MCF 10A (cell line): ENCODE measurements at regions of chr21 and their contacts with region 1.

Region 1: DNA sequence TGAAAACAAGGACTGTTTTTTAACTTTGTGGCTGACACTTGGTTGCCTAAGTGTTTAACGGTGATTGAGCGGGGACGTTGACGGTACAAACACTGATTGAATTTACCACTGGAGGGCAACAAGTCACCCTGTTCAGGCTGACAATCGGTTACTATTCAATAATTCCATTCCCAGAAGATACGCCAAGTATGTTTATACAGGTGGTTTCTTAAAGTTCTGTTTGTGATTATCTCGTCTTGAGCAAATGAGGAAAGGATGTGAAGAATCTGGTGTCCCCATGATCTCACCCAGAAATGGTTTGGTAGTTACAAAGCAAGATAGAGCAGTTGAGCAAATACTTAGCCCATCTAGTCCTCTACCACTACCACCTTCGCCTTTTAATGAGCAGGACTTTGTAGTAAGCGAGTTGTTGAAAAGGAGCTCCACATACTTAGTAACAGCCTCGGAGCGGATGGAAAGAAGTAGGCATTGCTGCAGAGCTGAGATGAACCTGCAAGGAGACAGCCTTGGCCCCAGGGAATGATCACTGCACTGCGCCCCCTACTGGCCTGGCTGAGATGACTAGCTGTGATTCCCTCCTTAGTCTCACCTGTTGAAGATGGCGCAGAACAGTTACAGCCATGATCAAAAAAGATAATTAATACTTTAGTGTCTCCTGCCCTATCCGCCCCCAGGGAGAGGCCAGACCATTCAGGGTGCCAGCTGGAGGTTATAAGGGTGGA is 36.3 kb downstream of the IFNAR1 start:
- DNase-seq: peak; percentile 81
- H3K4me3 Mint-ChIP-seq: peak overlapping the region; percentile 53
- H3K27ac Mint-ChIP-seq: peak overlapping the region; percentile 16
- H3K4me1 Mint-ChIP-seq: peaks cover 14% of the 10 kb centered on the region
- H3K27me3 Mint-ChIP-seq: no peaks in the 10 kb centered on the region
- CTCF ChIP-seq: peak; percentile 86

Region 2: DNA sequence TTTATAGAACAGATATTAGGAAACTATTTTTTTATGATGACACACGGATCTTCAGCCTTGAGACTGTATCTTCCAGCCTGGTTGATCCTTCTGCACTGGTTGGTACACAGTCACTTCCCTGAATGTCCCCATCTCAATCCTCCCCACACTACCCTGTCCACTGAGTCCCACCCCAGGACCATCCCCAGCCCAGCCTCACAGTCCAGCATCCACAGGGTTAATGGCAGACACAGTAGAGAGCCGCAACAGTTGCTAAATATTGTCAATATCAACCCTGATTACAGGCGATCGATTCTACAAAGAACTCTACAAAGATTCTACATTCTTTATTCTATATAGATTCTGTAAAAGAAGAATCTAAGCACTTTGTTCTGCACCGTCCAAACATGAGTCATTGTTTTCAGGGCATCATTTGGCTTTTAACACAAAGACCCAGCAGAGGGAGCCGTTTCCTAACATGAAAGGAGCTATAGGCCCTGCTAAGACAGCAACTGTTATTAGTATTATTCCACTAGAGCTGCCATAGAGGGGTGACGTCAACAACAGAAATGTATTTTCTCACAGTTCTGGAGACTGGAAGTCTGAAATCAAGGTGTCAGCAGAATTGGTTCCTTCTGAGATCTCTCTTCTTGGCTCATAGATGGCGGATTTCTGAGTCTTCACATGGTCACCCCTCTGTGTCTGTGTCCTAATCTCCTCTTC is 161.4 kb before region 1 on chr21:
- CTCF ChIA-PET with region 1: interaction called, 11 read pairs
- POLR2A ChIA-PET with region 1: interaction called, 10 read pairs
- intact Hi-C with region 1: loop called (anchors 1 kb)
- DNase-seq: peak; percentile 96
- H3K4me3 Mint-ChIP-seq: no peak overlapping the region
- H3K27ac Mint-ChIP-seq: no peak overlapping the region
- H3K4me1 Mint-ChIP-seq: peaks cover 20% of the 10 kb centered on the region
- H3K27me3 Mint-ChIP-seq: peaks cover 20% of the 10 kb centered on the region
- CTCF ChIP-seq: peak; percentile 76

Region 3: GRCh38 chr21:33348706-33349105 is 12.3 kb before region 1 on chr21:
- CTCF ChIA-PET with region 1: interaction called, 26 read pairs
- POLR2A ChIA-PET with region 1: interaction called, 4 read pairs
- intact Hi-C with region 1: no loop called
- DNase-seq: no peak
- H3K4me3 Mint-ChIP-seq: no peak overlapping the region
- H3K27ac Mint-ChIP-seq: no peak overlapping the region
- H3K4me1 Mint-ChIP-seq: no peaks in the 10 kb centered on the region
- H3K27me3 Mint-ChIP-seq: no peaks in the 10 kb centered on the region
- CTCF ChIP-seq: no peak

Region 4: DNA sequence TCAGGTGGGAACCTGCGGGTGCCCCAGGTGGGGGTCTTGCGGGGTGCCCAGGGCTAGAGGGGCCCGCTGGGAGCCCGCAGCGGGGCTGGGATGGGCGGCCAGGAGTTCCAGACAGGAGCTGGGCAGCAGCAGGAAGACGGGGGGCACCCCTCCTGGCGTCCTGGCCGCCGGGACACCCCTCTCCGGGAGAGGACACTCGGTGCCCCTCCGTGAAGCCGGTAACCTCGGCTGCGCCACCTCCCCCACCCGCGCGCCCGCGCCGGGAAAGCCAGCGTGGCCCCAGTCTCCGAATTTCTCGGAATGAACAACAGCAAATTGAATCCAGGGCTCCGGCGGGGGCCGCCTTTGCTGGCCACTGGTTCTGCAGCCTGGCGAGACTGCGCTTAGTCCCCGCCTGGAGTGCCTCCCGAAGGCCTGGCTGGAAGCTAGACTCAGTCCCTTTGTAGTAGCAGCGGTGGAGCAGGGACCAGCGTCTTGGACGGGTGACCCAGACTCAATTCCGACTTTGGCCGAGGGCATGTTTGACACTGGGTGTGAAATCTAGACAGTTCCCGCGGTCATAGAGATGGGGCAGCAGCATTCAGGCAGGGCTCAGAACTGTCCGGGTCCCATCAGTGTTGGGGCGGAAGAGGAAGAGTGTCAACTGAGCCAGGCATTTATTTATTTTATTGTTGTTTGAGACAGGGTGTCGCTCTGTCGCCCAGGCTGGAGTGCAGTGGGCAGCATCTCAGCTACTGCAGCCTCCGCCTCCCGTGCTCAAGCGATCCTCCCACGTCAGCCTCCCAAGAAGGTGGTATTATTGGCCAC is 42.9 kb after region 1 on chr21:
- CTCF ChIA-PET with region 1: interaction called, 14 read pairs
- POLR2A ChIA-PET with region 1: interaction called, 25 read pairs
- intact Hi-C with region 1: loop called (anchors 2 kb)
- DNase-seq: peak; percentile 45
- H3K4me3 Mint-ChIP-seq: peak overlapping the region; percentile 92
- H3K27ac Mint-ChIP-seq: peak overlapping the region; percentile 96
- H3K4me1 Mint-ChIP-seq: peaks cover 26% of the 10 kb centered on the region
- H3K27me3 Mint-ChIP-seq: no peaks in the 10 kb centered on the region
- CTCF ChIP-seq: no peak

Region 5: DNA sequence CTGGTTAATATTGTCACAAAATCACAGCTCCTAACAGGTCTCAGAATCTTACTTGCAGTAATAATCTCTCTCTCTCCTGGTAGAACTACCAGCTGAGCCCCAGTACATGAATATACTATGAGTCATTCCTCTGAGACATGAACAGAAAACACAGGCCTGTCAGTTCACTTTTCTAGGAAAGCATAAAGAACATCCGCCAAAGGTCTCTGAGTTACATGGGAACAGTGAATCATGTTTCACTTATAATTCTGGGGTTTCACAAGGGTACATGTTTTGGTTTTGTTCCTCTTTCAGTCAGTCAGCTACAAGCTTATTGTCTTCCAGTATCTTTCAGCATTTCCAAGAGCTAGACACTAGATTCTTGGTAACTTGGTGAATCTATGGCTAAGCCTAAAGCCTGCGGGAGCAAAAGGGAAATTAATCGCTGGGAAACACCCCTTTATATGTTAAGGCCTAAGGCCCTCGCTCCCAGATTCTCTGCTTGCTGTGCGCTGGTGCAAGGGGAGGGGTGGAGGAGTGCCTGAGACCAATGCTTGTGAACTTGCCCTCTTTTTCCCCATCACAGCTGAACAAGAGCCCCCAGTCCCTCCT is 73.8 kb after region 1 on chr21:
- CTCF ChIA-PET with region 1: interaction called, 37 read pairs
- POLR2A ChIA-PET with region 1: interaction called, 26 read pairs
- intact Hi-C with region 1: no loop called
- DNase-seq: peak; percentile 94
- H3K4me3 Mint-ChIP-seq: peak overlapping the region; percentile 61
- H3K27ac Mint-ChIP-seq: peak overlapping the region; percentile 95
- H3K4me1 Mint-ChIP-seq: peaks cover 21% of the 10 kb centered on the region
- H3K27me3 Mint-ChIP-seq: no peaks in the 10 kb centered on the region
- CTCF ChIP-seq: no peak

Region 6: GRCh38 chr21:33608559-33608958 is 247.5 kb after region 1 on chr21:
- CTCF ChIA-PET with region 1: no interaction called
- POLR2A ChIA-PET with region 1: no interaction called
- intact Hi-C with region 1: loop called (anchors 5 kb)
- DNase-seq: no peak
- H3K4me3 Mint-ChIP-seq: no peak overlapping the region
- H3K27ac Mint-ChIP-seq: peak overlapping the region; percentile 41
- H3K4me1 Mint-ChIP-seq: no peaks in the 10 kb centered on the region
- H3K27me3 Mint-ChIP-seq: no peaks in the 10 kb centered on the region
- CTCF ChIP-seq: no peak